ENCODE measurements at regions of chr2 and their contacts with region 1.

Region 1: GRCh38 chr2:174615871-174616436 is 18.4 kb upstream of the WIPF1 start:
- DNase-seq: no peak
- ATAC-seq: no peak
- H3K4me3 ChIP-seq: peak overlapping the region in 2 of 5 experiments; percentile 3 to 31
- H3K4me3 Mint-ChIP-seq: peak overlapping the region; percentile 81
- H3K27ac ChIP-seq: peak overlapping the region; percentile 47 to 73
- H3K27ac Mint-ChIP-seq: peak overlapping the region; percentile 87
- H3K4me1 ChIP-seq: peaks cover 68 to 77% of the 10 kb centered on the region in 2 donors
- H3K4me1 Mint-ChIP-seq: peaks cover 83% of the 10 kb centered on the region
- H3K27me3 ChIP-seq: no peaks in the 10 kb centered on the region
- H3K27me3 Mint-ChIP-seq: no peaks in the 10 kb centered on the region
- CTCF ChIP-seq: no peak

Region 2: GRCh38 chr2:174603280-174603679 is 12.7 kb before region 1 on chr2:
- CTCF ChIA-PET with region 1: interaction called, 28 read pairs
- POLR2A ChIA-PET with region 1: interaction called, 27 read pairs
- intact Hi-C with region 1: no loop called
- DNase-seq: peak; percentile 69
- ATAC-seq: no peak
- H3K4me3 ChIP-seq: no peak overlapping the region
- H3K4me3 Mint-ChIP-seq: no peak overlapping the region
- H3K27ac ChIP-seq: peak overlapping the region in 1 of 2 donors; percentile 8
- H3K27ac Mint-ChIP-seq: peak overlapping the region; percentile 71
- H3K4me1 ChIP-seq: peaks cover 69 to 74% of the 10 kb centered on the region in 2 donors
- H3K4me1 Mint-ChIP-seq: peaks cover 86% of the 10 kb centered on the region
- H3K27me3 ChIP-seq: no peaks in the 10 kb centered on the region
- H3K27me3 Mint-ChIP-seq: no peaks in the 10 kb centered on the region
- CTCF ChIP-seq: peak; percentile 71

Region 3: DNA sequence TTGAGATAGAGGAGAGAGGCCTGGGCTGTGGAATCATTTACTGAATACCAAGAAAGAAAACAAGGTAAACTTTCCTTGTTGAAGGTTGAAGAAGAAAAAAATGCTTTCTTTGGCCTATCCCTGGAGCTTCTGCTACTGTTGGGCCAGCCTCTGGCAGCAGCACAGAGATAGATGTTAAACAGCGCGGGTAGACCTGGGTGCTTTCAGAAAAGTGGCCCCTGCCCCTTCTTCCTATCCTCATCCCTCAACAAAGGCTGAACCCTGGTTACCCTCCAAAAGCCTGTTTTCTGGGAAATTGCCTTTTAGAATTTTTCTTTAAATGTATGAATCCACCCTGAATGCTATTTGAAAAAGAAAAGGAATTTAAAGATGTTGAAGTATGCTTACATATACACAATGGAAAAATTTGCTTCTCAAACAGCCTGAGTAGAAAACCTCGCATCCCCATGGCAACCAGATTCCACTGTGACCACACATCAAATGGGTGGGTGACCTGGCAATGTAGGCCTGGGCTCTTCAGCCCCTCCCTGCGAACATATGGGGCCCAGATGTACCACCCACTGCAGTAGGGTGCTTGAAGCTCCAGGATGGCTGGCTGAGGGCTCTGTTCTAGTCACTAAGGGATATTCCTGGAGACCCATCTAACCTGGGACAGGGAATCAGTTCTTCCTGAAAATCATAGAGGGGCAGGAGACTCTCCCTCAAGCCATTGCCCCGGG is 171.7 kb after region 1 on chr2:
- CTCF ChIA-PET with region 1: no interaction called
- POLR2A ChIA-PET with region 1: no interaction called
- intact Hi-C with region 1: no loop called
- DNase-seq: no peak
- ATAC-seq: no peak
- H3K4me3 ChIP-seq: no peak overlapping the region
- H3K4me3 Mint-ChIP-seq: no peak overlapping the region
- H3K27ac ChIP-seq: no peak overlapping the region
- H3K27ac Mint-ChIP-seq: no peak overlapping the region
- H3K4me1 ChIP-seq: no peaks in the 10 kb centered on the region
- H3K4me1 Mint-ChIP-seq: no peaks in the 10 kb centered on the region
- H3K27me3 ChIP-seq: peaks cover 0 to 5% (median 0%) of the 10 kb centered on the region in 4 experiments
- H3K27me3 Mint-ChIP-seq: peaks cover 13% of the 10 kb centered on the region
- CTCF ChIP-seq: no peak